CD8-positive, alpha-beta T cell (primary cell): ENCODE measurements at regions of chr5 and their contacts with region 1.

Region 1: GRCh38 chr5:113067635-113068344 is 91.2 kb downstream of the DCP2 start:
- DNase-seq: no peak
- ATAC-seq: no peak
- H3K4me3 ChIP-seq: no peak overlapping the region
- H3K4me3 Mint-ChIP-seq: no peak overlapping the region
- H3K27ac ChIP-seq: no peak overlapping the region
- H3K27ac Mint-ChIP-seq: peak overlapping the region; percentile 82
- H3K4me1 ChIP-seq: peaks cover 19% of the 10 kb centered on the region
- H3K4me1 Mint-ChIP-seq: peaks cover 69% of the 10 kb centered on the region
- H3K27me3 ChIP-seq: no peaks in the 10 kb centered on the region
- H3K27me3 Mint-ChIP-seq: no peaks in the 10 kb centered on the region
- CTCF ChIP-seq: no peak

Region 2: GRCh38 chr5:113022661-113023060 is 45.1 kb before region 1 on chr5:
- CTCF ChIA-PET with region 1: interaction called, 11 read pairs
- POLR2A ChIA-PET with region 1: interaction called, 5 read pairs
- intact Hi-C with region 1: no loop called
- DNase-seq: peak in 2 of 9 experiments; percentile 69 to 84
- ATAC-seq: peak; percentile 89
- H3K4me3 ChIP-seq: no peak overlapping the region
- H3K4me3 Mint-ChIP-seq: peak overlapping the region; percentile 23
- H3K27ac ChIP-seq: peak overlapping the region; percentile 24 to 68
- H3K27ac Mint-ChIP-seq: peak overlapping the region; percentile 78
- H3K4me1 ChIP-seq: peaks cover 42% of the 10 kb centered on the region
- H3K4me1 Mint-ChIP-seq: peaks cover 71% of the 10 kb centered on the region
- H3K27me3 ChIP-seq: no peaks in the 10 kb centered on the region
- H3K27me3 Mint-ChIP-seq: no peaks in the 10 kb centered on the region
- CTCF ChIP-seq: no peak

Region 3: GRCh38 chr5:113043491-113043931 is 24.3 kb before region 1 on chr5:
- CTCF ChIA-PET with region 1: interaction called, 11 read pairs
- POLR2A ChIA-PET with region 1: no interaction called
- intact Hi-C with region 1: no loop called
- DNase-seq: peak in 6 of 9 experiments; percentile 16 to 71 (median 40)
- ATAC-seq: no peak
- H3K4me3 ChIP-seq: no peak overlapping the region
- H3K4me3 Mint-ChIP-seq: no peak overlapping the region
- H3K27ac ChIP-seq: no peak overlapping the region
- H3K27ac Mint-ChIP-seq: no peak overlapping the region
- H3K4me1 ChIP-seq: no peaks in the 10 kb centered on the region
- H3K4me1 Mint-ChIP-seq: peaks cover 5% of the 10 kb centered on the region
- H3K27me3 ChIP-seq: no peaks in the 10 kb centered on the region
- H3K27me3 Mint-ChIP-seq: no peaks in the 10 kb centered on the region
- CTCF ChIP-seq: peak; percentile 24

Region 4: GRCh38 chr5:113294311-113295110 is 226.7 kb after region 1 on chr5:
- CTCF ChIA-PET with region 1: interaction called, 13 read pairs
- POLR2A ChIA-PET with region 1: interaction called, 4 read pairs
- intact Hi-C with region 1: loop called in 1 of 2 experiments (anchors 5 kb)
- DNase-seq: peak; percentile 56 to 84 (median 75)
- ATAC-seq: peak; percentile 91
- H3K4me3 ChIP-seq: peak overlapping the region; percentile 70 to 76
- H3K4me3 Mint-ChIP-seq: peak overlapping the region; percentile 94
- H3K27ac ChIP-seq: peak overlapping the region; percentile 20 to 46
- H3K27ac Mint-ChIP-seq: peak overlapping the region; percentile 75
- H3K4me1 ChIP-seq: peaks cover 17% of the 10 kb centered on the region
- H3K4me1 Mint-ChIP-seq: peaks cover 34% of the 10 kb centered on the region
- H3K27me3 ChIP-seq: peaks cover 0 to 9% of the 10 kb centered on the region in 2 experiments
- H3K27me3 Mint-ChIP-seq: peaks cover 16% of the 10 kb centered on the region
- CTCF ChIP-seq: no peak